Gastrocnemius medialis (tissue), 4 donors: ENCODE measurements at regions of chr15 and their contacts with region 1.

Region 1: GRCh38 chr15:92714477-92715401 is 59.2 kb upstream of the FAM174B start:
- DNase-seq: peak; percentile 31 to 49
- ATAC-seq: peak; percentile 89 to 91
- H3K4me3 ChIP-seq: peak overlapping the region; percentile 63 to 89 (median 70)
- H3K27ac ChIP-seq: peak overlapping the region; percentile 39 to 64 (median 54)
- H3K4me1 ChIP-seq: peaks cover 7% of the 10 kb centered on the region in 2 donors
- H3K27me3 ChIP-seq: no peaks in the 10 kb centered on the region
- CTCF ChIP-seq: peak; percentile 76 to 95 (median 85)
- POLR2A ChIP-seq: no peak

Region 2: DNA sequence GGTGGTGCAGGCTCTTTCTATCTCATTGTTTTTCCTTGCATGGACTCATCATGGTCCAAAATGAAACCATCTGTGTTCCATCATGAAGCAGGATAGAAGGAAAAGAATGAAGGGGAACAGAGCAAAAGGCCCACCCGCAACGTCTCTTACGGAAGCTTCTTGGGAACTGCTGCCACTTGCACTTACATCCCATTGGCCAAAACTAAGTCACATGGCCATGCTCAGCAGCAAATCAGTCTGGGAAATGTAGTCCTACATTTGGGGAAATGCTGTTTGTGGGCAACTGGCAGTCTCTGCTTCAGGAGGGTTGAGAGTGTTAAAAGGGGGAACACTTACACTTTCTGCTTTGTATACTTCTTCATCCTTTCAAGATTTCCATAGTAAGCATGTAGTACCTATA is 1423.1 kb before region 1 on chr15:
- in situ Hi-C with region 1: loop called in 1 of 4 experiments (anchors 25 kb)
- intact Hi-C with region 1: no loop called
- DNase-seq: no peak
- ATAC-seq: peak in 1 of 2 donors; percentile 30
- H3K4me3 ChIP-seq: peak overlapping the region in 1 of 4 donors; percentile 21
- H3K27ac ChIP-seq: no peak overlapping the region
- H3K4me1 ChIP-seq: no peaks in the 10 kb centered on the region
- H3K27me3 ChIP-seq: peaks cover 0 to 4% (median 2%) of the 10 kb centered on the region in 3 donors
- CTCF ChIP-seq: no peak
- POLR2A ChIP-seq: no peak

Region 3: DNA sequence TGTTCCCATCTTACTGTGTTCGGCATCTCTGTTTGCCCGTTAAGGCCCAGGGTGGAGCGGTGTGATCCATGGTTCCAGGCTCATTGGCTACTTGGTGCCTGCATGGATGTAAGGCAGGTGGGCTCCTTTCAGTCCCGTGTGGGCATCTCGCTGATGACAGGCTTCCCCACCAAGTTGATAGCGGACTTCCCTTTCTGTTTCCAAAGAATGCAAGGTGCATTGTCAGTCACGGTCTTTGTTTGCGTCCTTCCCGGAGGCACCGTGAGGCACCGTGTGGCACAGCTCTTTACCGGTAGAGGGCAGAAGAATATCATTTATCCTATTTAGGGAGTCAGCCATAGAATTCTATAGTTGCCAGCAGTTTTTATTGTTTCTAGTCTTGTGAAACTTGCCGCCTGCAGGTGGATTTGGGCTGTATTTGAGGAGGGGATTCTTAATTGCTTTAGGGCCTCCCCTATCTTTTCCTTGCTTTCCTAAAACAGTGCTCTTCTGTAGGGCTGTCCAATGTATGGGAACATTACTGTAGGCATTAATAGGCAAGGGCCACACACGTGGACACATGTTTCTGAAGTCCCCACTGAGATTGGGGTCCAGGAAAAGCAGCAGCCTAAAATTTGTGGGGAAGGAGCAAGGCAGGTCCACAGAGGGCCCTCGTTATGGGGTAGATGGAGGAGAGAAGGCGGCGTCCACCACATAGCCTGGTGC is 617.1 kb before region 1 on chr15:
- in situ Hi-C with region 1: loop called (anchors 25 kb)
- intact Hi-C with region 1: loop called (anchors 10 kb)
- DNase-seq: no peak
- ATAC-seq: peak; percentile 68 to 84
- H3K4me3 ChIP-seq: no peak overlapping the region
- H3K27ac ChIP-seq: no peak overlapping the region
- H3K4me1 ChIP-seq: no peaks in the 10 kb centered on the region
- H3K27me3 ChIP-seq: no peaks in the 10 kb centered on the region
- CTCF ChIP-seq: peak; percentile 24 to 65 (median 58)
- POLR2A ChIP-seq: no peak

Region 4: DNA sequence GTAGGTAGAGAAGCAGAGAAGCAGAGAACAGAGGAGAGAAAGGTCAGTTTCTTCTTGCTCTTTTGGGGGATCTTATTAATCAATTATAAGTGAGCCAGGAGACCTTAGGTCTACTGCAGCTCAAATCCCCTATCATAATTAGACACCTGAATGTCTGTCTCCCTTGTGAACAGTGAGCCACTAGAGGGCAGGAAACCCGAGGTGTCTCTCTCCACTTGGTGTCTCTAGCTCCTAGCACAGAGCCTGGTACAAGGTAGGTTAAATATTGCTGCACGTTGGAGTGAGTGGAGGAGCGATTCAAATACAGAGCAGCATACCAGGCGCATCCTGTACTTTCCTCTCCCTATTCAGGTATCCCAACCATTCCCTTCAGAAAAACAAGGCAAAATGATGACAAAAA is 323.1 kb before region 1 on chr15:
- in situ Hi-C with region 1: loop called in 2 of 4 experiments (anchors 25 kb)
- intact Hi-C with region 1: no loop called
- DNase-seq: no peak
- ATAC-seq: peak; percentile 53 to 70
- H3K4me3 ChIP-seq: no peak overlapping the region
- H3K27ac ChIP-seq: no peak overlapping the region
- H3K4me1 ChIP-seq: peaks cover 0 to 7% of the 10 kb centered on the region in 2 donors
- H3K27me3 ChIP-seq: peaks cover 31 to 43% (median 40%) of the 10 kb centered on the region in 3 donors
- CTCF ChIP-seq: peak; percentile 7 to 44 (median 18)
- POLR2A ChIP-seq: no peak

Region 5: GRCh38 chr15:92636908-92637481 is 77.7 kb before region 1 on chr15:
- in situ Hi-C with region 1: no loop called
- intact Hi-C with region 1: no loop called
- DNase-seq: no peak
- ATAC-seq: no peak
- H3K4me3 ChIP-seq: no peak overlapping the region
- H3K27ac ChIP-seq: peak overlapping the region in 1 of 4 donors; percentile 74
- H3K4me1 ChIP-seq: peaks cover 13 to 18% of the 10 kb centered on the region in 2 donors
- H3K27me3 ChIP-seq: no peaks in the 10 kb centered on the region
- CTCF ChIP-seq: no peak
- POLR2A ChIP-seq: no peak